Motor neuron (in vitro differentiated cells): ENCODE measurements at regions of chr3 and their contacts with region 1.

Region 1: GRCh38 chr3:160399125-160400029 is at the starts of genes IFT80 and SMC4:
- ATAC-seq: peak; percentile 77 to 98 (median 94)
- H3K4me3 ChIP-seq: peak within 1 kb of the TSS; percentile 46 to 86 (median 61)
- H3K27ac ChIP-seq: peak within 1 kb of the TSS; percentile 59 to 80
- H3K4me1 ChIP-seq: peaks cover 5 to 8% of the 10 kb centered on the region in 2 donors
- total RNA-seq, gene IFT80: 22.4 to 50.2 (median 38.7) TPM
- total RNA-seq, gene SMC4: 6.8 to 106 (median 11.2) TPM

Region 2: GRCh38 chr3:160027541-160028195 is 371.7 kb before region 1 on chr3:
- in situ Hi-C with region 1: loop called in 3 of 9 experiments (anchors 25 kb)
- ATAC-seq: peak in 3 of 8 experiments; percentile 31 to 89 (median 87)
- H3K4me3 ChIP-seq: no peak overlapping the region
- H3K27ac ChIP-seq: no peak overlapping the region
- H3K4me1 ChIP-seq: no peaks in the 10 kb centered on the region

Region 3: GRCh38 chr3:160531311-160531710 is 131.9 kb after region 1 on chr3:
- in situ Hi-C with region 1: no loop called
- ATAC-seq: no peak
- H3K4me3 ChIP-seq: no peak overlapping the region
- H3K27ac ChIP-seq: no peak overlapping the region
- H3K4me1 ChIP-seq: no peaks in the 10 kb centered on the region